MCF 10A (cell line): ENCODE measurements at regions of chr18 and their contacts with region 1.

Region 1: DNA sequence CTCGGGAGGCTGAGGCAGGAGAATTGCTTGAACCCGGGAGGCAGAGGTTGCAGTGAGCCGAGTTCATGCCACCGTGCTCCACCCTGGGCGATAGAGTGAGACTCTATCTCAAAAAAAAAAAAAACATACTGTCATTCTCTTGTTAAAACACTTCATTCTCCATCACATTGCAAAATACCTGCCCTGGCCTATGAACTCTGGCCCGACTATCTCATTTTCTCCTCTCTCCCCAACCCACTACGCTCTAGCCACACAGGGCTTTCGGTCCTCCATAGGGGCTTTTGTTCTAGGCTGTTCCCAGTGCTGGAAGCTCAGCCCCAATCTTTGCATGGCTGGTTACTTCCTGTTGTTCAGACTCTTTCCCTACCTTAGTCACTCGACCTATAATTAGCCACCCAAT is 10.3 kb downstream of the CEP76 start:
- DNase-seq: no peak
- H3K4me3 Mint-ChIP-seq: no peak overlapping the region
- H3K27ac Mint-ChIP-seq: no peak overlapping the region
- H3K4me1 Mint-ChIP-seq: peaks cover 15% of the 10 kb centered on the region
- H3K27me3 Mint-ChIP-seq: no peaks in the 10 kb centered on the region
- CTCF ChIP-seq: no peak

Region 2: GRCh38 chr18:12702221-12703095 is 10.3 kb after region 1 on chr18 and contains the starts of genes CEP76 and PSMG2:
- CTCF ChIA-PET with region 1: no interaction called
- POLR2A ChIA-PET with region 1: interaction called, 11 read pairs
- intact Hi-C with region 1: no loop called
- DNase-seq: peak; percentile 90
- H3K4me3 Mint-ChIP-seq: peak within 1 kb of the TSS; percentile 100
- H3K27ac Mint-ChIP-seq: peak within 1 kb of the TSS; percentile 100
- H3K4me1 Mint-ChIP-seq: peaks cover 45% of the 10 kb centered on the region
- H3K27me3 Mint-ChIP-seq: no peaks in the 10 kb centered on the region
- CTCF ChIP-seq: no peak
- total RNA-seq, gene CEP76: 4.9 and 6.4 TPM in 2 replicates
- total RNA-seq, gene PSMG2: 88.6 and 100 TPM in 2 replicates